ENCODE measurements at regions of chr9 and their contacts with region 1.

Region 1: DNA sequence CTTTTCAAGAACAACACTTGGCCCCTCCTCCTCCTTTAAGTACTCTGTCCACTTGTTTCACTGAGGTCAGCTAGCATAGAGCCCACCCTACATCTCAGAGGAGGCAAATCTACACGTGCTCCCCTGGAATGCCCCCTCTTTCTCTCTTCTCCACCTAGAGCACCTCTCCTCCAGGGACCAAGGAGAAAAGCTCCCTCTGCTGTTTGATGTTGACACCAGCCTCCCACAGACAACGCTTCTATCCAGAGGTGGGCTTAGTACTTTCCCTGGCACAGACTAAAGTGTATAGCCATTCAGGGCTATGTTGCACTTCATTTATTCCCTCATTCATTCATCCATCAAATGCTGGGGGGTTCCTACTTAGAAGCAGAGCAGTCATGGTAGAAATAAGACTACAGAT is 68.2 kb upstream of the TAF1L start:
- DNase-seq: no peak
- H3K4me3 ChIP-seq: no peak overlapping the region
- H3K4me3 Mint-ChIP-seq: no peak overlapping the region
- H3K27ac Mint-ChIP-seq: no peak overlapping the region
- H3K4me1 ChIP-seq: no peaks in the 10 kb centered on the region
- H3K4me1 Mint-ChIP-seq: no peaks in the 10 kb centered on the region
- H3K27me3 ChIP-seq: no peaks in the 10 kb centered on the region; the same call in 1 of the 2 replicates
- H3K27me3 Mint-ChIP-seq: peaks cover 12% of the 10 kb centered on the region
- CTCF ChIP-seq: peak in 1 of 2 experiments; percentile 35

Region 2: DNA sequence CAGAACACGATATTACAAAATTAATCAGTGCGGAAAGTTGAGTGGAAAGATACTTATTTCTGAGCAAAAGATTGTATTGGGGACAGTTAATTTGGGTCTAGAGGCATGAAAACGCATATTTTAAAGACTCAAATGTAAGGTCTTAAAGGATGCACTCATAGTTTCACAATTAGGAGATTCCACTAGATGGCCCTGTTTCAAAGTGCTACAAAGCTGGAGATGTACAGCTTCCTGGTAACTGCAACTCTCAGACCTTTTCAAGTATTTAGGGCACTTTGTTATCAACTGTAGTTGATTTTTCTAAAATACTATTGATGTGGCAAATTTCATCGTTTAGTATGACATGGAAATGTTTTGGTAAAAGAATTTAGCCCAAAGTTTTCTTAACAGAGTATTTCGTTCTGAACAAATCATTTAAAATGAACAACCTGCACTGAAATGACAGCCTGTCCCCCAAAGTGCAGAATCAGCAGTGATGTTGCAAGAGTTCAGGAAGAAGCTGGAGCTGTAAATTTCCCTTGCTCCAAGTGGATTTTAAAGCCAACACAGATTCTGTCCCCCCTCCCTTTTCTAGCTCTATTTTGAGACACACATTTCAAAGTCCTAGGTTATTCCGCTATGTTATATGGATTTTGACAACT is 114.4 kb before region 1 on chr9:
- CTCF ChIA-PET with region 1: interaction called, 8 read pairs
- POLR2A ChIA-PET with region 1: no interaction called
- intact Hi-C with region 1: loop called (anchors 2 kb)
- DNase-seq: peak in 1 of 2 experiments; percentile 31
- H3K4me3 ChIP-seq: no peak overlapping the region
- H3K4me3 Mint-ChIP-seq: no peak overlapping the region
- H3K27ac Mint-ChIP-seq: no peak overlapping the region
- H3K4me1 ChIP-seq: no peaks in the 10 kb centered on the region
- H3K4me1 Mint-ChIP-seq: no peaks in the 10 kb centered on the region
- H3K27me3 ChIP-seq: no peaks in the 10 kb centered on the region
- H3K27me3 Mint-ChIP-seq: peaks cover 21% of the 10 kb centered on the region
- CTCF ChIP-seq: peak in 1 of 2 experiments; percentile 54

Region 3: GRCh38 chr9:32723789-32724325 is 20.2 kb after region 1 on chr9:
- CTCF ChIA-PET with region 1: no interaction called
- POLR2A ChIA-PET with region 1: no interaction called
- intact Hi-C with region 1: no loop called
- DNase-seq: no peak
- H3K4me3 ChIP-seq: no peak overlapping the region
- H3K4me3 Mint-ChIP-seq: no peak overlapping the region
- H3K27ac Mint-ChIP-seq: no peak overlapping the region
- H3K4me1 ChIP-seq: no peaks in the 10 kb centered on the region
- H3K4me1 Mint-ChIP-seq: no peaks in the 10 kb centered on the region
- H3K27me3 ChIP-seq: no peaks in the 10 kb centered on the region
- H3K27me3 Mint-ChIP-seq: peaks cover 15% of the 10 kb centered on the region
- CTCF ChIP-seq: no peak